HEK293 (cell line): ENCODE measurements at regions of chr2 and their contacts with region 1.

Region 1: GRCh38 chr2:19989681-19990415 is at the start of gene WDR35:
- H3K4me3 ChIP-seq: peak within 1 kb of the TSS; percentile 56
- H3K27ac ChIP-seq: no peak within 1 kb of the TSS; the same call in 1 of the 2 replicates
- H3K4me1 ChIP-seq: 0 out of 2 replicates have a peak, but pooled peaks cover 3% of the 10 kb centered on the region
- CTCF ChIP-seq: no peak

Region 2: DNA sequence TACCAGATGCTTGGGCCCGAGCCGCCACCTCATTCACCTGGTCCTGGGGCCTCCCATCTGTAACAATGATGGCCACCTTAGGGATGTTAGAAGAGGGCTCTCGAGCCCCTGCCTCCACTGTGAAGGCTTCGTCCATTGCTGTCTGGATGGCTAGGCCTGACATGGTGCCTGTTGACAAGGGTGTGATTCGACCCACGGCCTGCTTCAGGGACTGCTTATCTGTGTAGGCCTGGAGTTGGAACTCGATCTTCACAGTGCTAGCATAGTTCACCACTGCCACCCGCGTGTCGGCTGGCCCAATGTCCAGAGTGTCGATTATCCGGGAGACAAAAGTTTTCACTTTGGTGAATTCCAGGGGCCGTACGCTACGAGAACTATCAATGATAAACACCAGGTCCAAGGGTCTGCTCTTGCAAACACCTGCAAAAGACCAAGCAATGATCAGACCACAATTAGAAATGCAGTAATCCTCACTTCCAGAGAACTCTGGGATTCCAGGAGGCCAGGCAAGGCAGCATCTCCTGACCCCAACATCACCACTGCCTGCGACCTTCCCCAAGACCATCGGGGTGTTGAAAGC is 16.1 kb after region 1 on chr2:
- CTCF ChIA-PET with region 1: no interaction called
- POLR2A ChIA-PET with region 1: no interaction called
- H3K4me3 ChIP-seq: no peak overlapping the region
- H3K27ac ChIP-seq: no peak overlapping the region
- H3K4me1 ChIP-seq: no peaks in the 10 kb centered on the region
- CTCF ChIP-seq: no peak

Region 3: GRCh38 chr2:20051532-20052228 is 61.8 kb after region 1 on chr2 and contains the start of gene LAPTM4A:
- CTCF ChIA-PET with region 1: no interaction called
- POLR2A ChIA-PET with region 1: interaction called, 11 read pairs
- H3K4me3 ChIP-seq: peak within 1 kb of the TSS; percentile 81
- H3K27ac ChIP-seq: peak within 1 kb of the TSS; percentile 83
- H3K4me1 ChIP-seq: peaks cover 7% of the 10 kb centered on the region
- CTCF ChIP-seq: 0 out of 2 replicates have a peak, but pooled peaks have one; percentile 9